CD8-positive, alpha-beta T cell (primary cell): ENCODE measurements at regions of chr2 and their contacts with region 1.

Region 1: GRCh38 chr2:71385012-71385411 is 53.4 kb downstream of the ZNF638 start:
- DNase-seq: no peak
- ATAC-seq: no peak
- H3K4me3 ChIP-seq: no peak overlapping the region
- H3K4me3 Mint-ChIP-seq: no peak overlapping the region
- H3K27ac ChIP-seq: no peak overlapping the region
- H3K27ac Mint-ChIP-seq: no peak overlapping the region
- H3K4me1 ChIP-seq: no peaks in the 10 kb centered on the region
- H3K4me1 Mint-ChIP-seq: no peaks in the 10 kb centered on the region
- H3K27me3 ChIP-seq: no peaks in the 10 kb centered on the region
- H3K27me3 Mint-ChIP-seq: no peaks in the 10 kb centered on the region
- CTCF ChIP-seq: no peak

Region 2: DNA sequence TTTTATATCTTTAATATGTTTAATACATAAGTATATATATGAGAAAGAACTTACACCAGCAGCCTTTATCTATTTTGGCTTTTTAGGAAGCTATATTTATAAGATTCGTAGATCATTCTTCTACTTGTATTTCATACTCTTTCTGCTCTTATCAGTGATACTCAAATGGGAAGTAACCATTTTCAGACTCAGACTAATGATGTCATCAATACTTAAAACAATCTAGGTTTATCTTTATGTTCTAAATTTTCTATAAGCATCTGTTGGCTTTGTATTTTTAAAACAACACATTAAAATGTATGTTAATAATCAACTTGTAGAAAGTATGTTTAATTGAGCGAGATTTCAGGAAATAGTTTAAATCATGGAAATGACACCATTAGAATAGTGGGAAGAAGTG is 17.4 kb after region 1 on chr2:
- CTCF ChIA-PET with region 1: no interaction called
- POLR2A ChIA-PET with region 1: interaction called, 3 read pairs
- intact Hi-C with region 1: loop called in 1 of 2 experiments (anchors 1 kb)
- DNase-seq: no peak
- ATAC-seq: no peak
- H3K4me3 ChIP-seq: no peak overlapping the region
- H3K4me3 Mint-ChIP-seq: no peak overlapping the region
- H3K27ac ChIP-seq: no peak overlapping the region
- H3K27ac Mint-ChIP-seq: peak overlapping the region; percentile 42
- H3K4me1 ChIP-seq: no peaks in the 10 kb centered on the region
- H3K4me1 Mint-ChIP-seq: no peaks in the 10 kb centered on the region
- H3K27me3 ChIP-seq: no peaks in the 10 kb centered on the region
- H3K27me3 Mint-ChIP-seq: no peaks in the 10 kb centered on the region
- CTCF ChIP-seq: no peak